ENCODE measurements at regions of chr7 and their contacts with region 1.

Region 1: DNA sequence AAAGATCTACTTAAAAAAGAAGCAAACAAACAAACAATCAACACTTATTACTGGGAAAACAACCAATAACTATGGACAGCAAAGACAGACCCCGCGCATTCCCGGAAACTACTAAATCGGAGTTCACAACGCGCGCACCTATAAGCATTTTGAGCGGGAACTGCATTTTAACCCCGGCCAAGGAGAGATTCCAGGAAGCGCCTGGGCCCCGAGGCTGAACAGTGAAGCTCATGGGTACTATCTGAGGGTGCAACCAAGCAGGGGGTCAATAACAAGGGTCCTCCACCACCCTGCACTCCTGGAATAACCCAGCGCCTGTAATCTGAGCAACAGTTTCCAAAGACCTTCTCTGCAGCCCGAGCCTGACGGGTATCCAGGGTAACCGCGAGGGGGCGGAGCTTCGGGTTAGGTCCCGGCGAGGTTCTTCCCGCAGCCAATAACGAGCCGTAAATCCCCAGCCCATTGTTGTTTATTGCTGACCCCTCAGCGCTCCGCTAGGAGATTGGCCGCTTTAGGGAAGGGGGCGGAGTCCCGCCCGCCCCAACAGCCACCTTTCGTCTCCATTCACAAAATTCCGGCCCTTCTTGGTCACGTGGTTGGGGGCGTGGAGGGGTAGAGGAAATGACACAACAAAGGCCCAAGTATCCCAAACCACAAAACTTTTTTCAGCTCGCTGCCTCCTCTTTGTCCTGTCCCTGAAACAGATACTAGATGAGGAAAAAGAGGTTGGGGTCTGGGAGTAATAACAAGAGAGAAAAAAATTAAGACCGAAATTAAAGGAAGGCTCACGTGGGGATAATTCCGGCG is 1.7 kb upstream of the ETV1 start:
- DNase-seq: peak; percentile 39 to 67 (median 49)
- H3K4me3 ChIP-seq: peak overlapping the region; percentile 66 to 75
- H3K4me3 Mint-ChIP-seq: no peak overlapping the region
- H3K27ac ChIP-seq: no peak overlapping the region
- H3K27ac Mint-ChIP-seq: no peak overlapping the region
- H3K4me1 ChIP-seq: peaks cover 16% of the 10 kb centered on the region
- H3K4me1 Mint-ChIP-seq: no peaks in the 10 kb centered on the region
- H3K27me3 ChIP-seq: peaks cover 7% of the 10 kb centered on the region
- H3K27me3 Mint-ChIP-seq: no peaks in the 10 kb centered on the region

Region 2: DNA sequence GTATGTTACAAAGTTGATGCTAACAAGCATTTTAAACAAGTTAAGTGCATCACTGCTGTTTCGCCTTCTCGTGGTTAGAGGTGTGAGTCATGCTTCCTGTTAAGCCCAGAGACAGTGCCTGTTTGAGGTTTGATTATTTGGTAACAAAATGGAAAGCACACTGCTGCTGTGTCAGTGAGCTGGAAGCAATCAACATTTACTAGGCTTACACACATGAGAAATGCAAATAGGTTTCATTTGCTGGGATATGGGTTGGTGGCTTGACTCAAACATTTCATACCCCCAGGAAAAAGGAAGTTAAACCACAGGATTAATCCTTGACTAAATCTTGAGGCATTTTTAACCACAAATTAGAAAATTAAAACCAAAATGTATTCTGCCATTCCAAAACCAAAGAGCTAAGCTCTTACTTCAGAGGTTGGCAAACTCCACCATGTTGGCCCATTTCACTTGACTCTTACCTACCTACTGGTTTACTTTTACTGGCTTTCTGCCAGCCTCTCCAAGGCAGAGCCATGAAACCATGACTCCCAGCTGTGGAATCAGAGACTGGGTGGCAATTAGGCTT is 140.9 kb before region 1 on chr7:
- CTCF ChIA-PET with region 1: no interaction called
- POLR2A ChIA-PET with region 1: interaction called, 6 read pairs
- intact Hi-C with region 1: loop called (anchors 1 kb)
- DNase-seq: peak; percentile 61 to 84 (median 69)
- H3K4me3 ChIP-seq: no peak overlapping the region
- H3K4me3 Mint-ChIP-seq: peak overlapping the region; percentile 36 to 72 (median 61)
- H3K27ac ChIP-seq: peak overlapping the region; percentile 16
- H3K27ac Mint-ChIP-seq: peak overlapping the region; percentile 84 to 95 (median 88)
- H3K4me1 ChIP-seq: peaks cover 24% of the 10 kb centered on the region
- H3K4me1 Mint-ChIP-seq: peaks cover 14 to 33% (median 20%) of the 10 kb centered on the region in 4 donors
- H3K27me3 ChIP-seq: no peaks in the 10 kb centered on the region
- H3K27me3 Mint-ChIP-seq: no peaks in the 10 kb centered on the region

Region 3: DNA sequence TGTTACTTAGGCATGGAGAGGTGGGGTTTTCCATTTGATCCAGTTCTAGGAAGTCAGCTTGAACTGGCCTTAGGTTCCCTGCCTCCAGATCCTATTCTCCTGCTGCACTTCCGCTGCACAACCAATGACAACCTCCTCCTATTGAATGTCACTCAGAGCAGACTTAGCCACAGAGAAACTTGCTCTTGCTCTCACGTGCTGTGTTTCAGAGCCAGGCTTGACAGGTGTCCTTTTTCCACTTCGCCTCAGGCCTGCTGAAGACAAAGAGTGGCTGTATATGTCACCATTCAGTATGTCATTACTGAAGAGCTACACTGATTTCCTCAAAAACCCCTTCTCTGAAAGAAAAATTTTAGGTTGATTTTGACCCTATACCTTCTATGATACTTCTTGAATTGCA is 113.7 kb after region 1 on chr7:
- CTCF ChIA-PET with region 1: no interaction called
- POLR2A ChIA-PET with region 1: no interaction called
- intact Hi-C with region 1: no loop called
- DNase-seq: no peak
- H3K4me3 ChIP-seq: no peak overlapping the region
- H3K4me3 Mint-ChIP-seq: no peak overlapping the region
- H3K27ac ChIP-seq: no peak overlapping the region
- H3K27ac Mint-ChIP-seq: peak overlapping the region in 1 of 7 donors; percentile 68
- H3K4me1 ChIP-seq: no peaks in the 10 kb centered on the region
- H3K4me1 Mint-ChIP-seq: no peaks in the 10 kb centered on the region
- H3K27me3 ChIP-seq: no peaks in the 10 kb centered on the region
- H3K27me3 Mint-ChIP-seq: no peaks in the 10 kb centered on the region